ENCODE measurements at regions of chr2 and their contacts with region 1.

Region 1: DNA sequence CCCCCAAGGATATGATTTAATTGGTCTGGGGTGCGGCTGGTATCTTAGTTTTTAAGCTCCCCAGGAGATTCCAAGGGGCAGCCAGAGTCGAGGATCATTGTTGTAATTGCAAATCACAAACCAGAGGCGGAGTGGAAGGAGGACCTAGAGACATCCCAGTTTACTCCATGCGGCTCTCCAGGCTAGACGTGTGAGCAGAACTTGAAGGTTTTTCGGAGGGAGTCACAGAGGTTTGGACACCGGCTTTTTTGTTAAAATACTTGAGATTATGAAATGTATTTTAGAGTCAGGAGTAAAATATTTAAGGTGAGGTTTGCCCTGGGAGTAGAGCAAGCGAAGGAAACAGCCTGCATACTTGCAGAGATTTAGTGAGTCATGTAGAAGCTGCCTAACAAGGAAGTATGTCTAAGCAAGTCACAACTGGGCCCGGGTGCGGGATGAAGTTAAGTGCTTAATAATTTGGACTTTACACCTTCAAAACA is 39.5 kb downstream of the TGOLN2 start:
- DNase-seq: no peak
- H3K4me3 Mint-ChIP-seq: no peak overlapping the region
- H3K27ac Mint-ChIP-seq: no peak overlapping the region
- H3K4me1 Mint-ChIP-seq: peaks cover 22% of the 10 kb centered on the region
- H3K27me3 Mint-ChIP-seq: no peaks in the 10 kb centered on the region

Region 2: DNA sequence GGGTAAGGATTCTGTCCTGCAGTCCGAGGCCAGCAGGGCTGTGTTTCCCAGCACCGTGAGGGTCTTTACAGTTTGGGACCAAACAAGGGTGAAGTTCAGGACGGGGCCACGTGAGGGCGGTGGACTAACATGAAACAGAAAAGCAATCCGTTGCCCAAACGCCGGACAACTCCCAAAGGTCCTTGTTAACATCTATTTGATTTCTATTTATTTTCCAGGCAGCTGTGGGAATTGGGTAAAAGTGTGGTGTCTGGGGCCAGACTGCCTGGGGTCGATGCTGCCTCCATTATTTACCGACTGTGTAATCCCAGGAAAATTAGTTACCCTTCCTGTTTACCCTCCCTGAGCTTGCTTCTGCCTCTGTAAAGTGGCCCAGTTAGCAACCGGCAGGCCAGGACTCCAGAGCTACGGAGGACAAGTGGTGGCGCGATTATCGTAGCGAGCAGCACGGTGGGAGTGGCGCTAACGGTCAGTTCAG is 221.4 kb before region 1 on chr2:
- intact Hi-C with region 1: loop called (anchors 5 kb)
- DNase-seq: peak; percentile 18
- H3K4me3 Mint-ChIP-seq: no peak overlapping the region
- H3K27ac Mint-ChIP-seq: no peak overlapping the region
- H3K4me1 Mint-ChIP-seq: peaks cover 2% of the 10 kb centered on the region
- H3K27me3 Mint-ChIP-seq: peaks cover 26% of the 10 kb centered on the region

Region 3: DNA sequence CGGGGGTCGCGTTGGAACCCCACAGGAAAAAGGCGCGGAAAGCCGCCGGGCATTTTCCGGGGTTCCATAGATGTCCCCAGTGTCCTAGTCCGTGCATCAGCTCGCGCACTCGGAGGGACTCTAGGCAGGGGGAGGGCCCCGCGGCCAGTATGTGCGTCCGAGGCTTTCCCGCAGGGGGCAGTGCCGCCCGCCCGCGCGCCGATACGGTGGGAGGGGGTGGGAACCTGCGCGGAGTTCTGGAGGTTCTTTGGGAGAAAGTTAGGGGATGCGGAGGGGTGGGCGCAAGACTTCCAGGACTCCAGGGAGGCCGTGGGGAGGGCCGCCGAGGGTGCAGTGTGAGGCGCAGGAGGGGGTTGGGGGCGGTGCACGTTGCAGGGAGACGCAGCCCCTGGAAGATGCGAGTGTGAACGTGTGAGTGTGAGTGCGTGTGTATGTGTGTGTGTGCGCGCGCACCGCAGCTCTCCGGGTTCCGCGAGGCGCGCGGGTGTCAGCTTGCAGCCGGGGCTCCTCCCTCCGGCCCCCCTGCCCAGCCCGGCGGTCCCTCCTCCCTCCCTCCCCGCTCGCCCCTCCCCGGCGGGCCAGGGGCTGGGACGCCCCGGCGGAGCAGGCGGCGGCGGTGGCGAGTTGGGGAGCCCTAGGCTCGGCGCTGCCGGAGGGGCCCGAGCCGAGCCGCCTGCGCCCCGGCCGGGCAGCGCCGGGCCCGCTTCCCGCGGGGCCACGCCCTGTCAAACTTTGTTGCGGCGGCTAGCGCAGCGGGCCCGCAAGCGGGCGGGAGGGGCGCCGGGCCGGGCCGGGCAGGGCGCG is 155.2 kb before region 1 on chr2 and contains the start of gene TCF7L1:
- intact Hi-C with region 1: loop called (anchors 5 kb)
- DNase-seq: peak; percentile 29
- H3K4me3 Mint-ChIP-seq: peak within 1 kb of the TSS; percentile 71
- H3K27ac Mint-ChIP-seq: no peak within 1 kb of the TSS
- H3K4me1 Mint-ChIP-seq: peaks cover 4% of the 10 kb centered on the region
- H3K27me3 Mint-ChIP-seq: peaks cover 62% of the 10 kb centered on the region
- total RNA-seq, gene TCF7L1: 0.11 and 0.18 TPM in 2 replicates

Region 4: DNA sequence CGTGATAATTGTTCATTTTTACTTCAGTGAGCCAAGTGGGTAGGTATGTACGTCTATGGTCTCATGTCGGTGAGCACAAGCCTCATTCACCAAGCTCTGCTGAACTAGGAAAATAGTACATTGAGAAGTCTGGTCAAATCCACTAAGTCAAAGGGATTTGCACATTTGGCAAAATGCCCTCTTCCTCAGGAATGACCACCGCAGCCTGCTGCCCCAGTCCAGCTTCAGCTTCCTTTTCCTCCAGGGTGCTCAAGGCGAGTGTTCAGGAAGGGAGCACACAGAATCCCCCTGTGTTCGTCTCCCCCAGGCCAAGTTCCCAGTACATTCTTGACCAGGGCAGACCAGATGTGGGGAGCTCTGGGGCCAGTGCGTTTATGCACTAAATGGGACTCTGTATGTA is 132.1 kb before region 1 on chr2:
- intact Hi-C with region 1: no loop called
- DNase-seq: no peak
- H3K4me3 Mint-ChIP-seq: no peak overlapping the region
- H3K27ac Mint-ChIP-seq: no peak overlapping the region
- H3K4me1 Mint-ChIP-seq: peaks cover 5% of the 10 kb centered on the region
- H3K27me3 Mint-ChIP-seq: peaks cover 5% of the 10 kb centered on the region

Region 5: DNA sequence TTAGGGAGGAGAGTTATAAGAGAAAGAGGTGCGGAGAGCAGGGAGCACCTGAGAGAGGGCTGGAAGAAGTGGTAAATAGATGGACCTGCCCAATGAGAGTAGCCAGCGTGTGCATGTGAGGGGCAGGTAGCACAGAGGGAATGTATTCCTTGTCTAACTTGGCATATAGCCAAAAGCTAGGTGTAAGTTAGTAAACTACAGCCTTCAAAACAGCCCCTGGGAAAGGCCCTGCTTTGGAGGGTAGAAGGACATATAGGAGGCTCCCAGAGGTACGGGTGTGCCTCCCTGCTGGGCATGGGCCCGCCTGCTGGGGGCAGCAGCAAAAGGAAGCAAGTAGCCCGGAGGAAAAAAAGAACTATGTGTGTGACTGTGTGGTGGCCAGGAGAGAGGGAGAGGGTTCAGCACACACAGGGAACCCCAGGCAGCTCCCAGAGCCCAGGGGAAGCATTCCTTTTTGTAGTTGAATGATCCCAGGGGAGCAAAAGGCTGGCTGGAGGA is 107.1 kb before region 1 on chr2:
- intact Hi-C with region 1: loop called (anchors 10 kb)
- DNase-seq: no peak
- H3K4me3 Mint-ChIP-seq: no peak overlapping the region
- H3K27ac Mint-ChIP-seq: no peak overlapping the region
- H3K4me1 Mint-ChIP-seq: peaks cover 1% of the 10 kb centered on the region
- H3K27me3 Mint-ChIP-seq: peaks cover 4% of the 10 kb centered on the region

Region 6: GRCh38 chr2:85266146-85267041 is 21.9 kb before region 1 on chr2:
- intact Hi-C with region 1: loop called (anchors 1 kb)
- DNase-seq: peak; percentile 43
- H3K4me3 Mint-ChIP-seq: no peak overlapping the region
- H3K27ac Mint-ChIP-seq: no peak overlapping the region
- H3K4me1 Mint-ChIP-seq: no peaks in the 10 kb centered on the region
- H3K27me3 Mint-ChIP-seq: peaks cover 26% of the 10 kb centered on the region